PC-3 (cell line): ENCODE measurements at regions of chr11 and their contacts with region 1.

Region 1: DNA sequence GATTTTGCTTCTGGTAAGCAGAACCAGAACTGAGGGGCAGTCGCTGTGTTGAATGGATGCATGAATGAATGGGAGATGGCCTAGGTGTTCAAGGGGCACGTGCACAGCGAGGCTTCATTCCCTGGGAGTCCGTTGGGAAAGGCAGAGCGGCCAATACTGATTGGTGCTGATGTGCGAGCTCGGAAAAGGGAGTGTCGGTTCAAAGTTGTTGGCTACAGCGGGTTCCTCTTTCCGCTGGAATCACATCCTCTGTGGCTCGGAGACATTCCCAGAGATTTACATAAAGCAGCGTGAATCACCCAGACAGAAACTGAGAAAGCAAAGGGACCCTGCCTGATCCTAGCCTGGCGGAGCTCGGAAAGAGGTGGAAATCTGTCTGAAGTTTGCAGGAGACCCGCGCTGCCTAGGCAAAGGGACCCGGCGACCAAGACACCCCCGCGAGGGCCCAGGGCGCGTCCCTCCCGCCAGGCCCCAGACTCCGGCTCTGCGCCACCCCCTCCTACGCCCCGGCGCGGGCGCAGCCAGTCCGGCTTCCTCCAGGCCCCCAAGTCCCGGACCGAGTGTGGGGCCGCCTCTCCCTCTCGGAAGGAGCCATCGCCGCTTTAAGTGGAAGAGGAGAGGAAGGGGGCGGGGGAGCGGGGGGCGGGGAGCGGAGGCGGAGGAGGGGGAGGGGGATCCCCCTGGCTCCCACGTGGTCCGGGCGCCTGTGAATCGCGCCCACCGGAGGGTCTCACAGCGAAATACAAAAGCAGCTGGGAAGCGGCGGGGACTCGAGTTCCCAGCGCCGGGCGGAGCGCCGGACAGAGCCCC is at the start of gene FJX1:
- DNase-seq: peak; percentile 86
- ATAC-seq: peak; percentile 46
- H3K4me3 ChIP-seq: peak within 1 kb of the TSS; percentile 88
- H3K27ac ChIP-seq: peak within 1 kb of the TSS; percentile 93
- H3K4me1 ChIP-seq: peaks cover 53% of the 10 kb centered on the region
- H3K27me3 ChIP-seq: no peaks in the 10 kb centered on the region
- CTCF ChIP-seq: no peak
- total RNA-seq, gene FJX1: 71.4 and 97.1 TPM in 2 replicates

Region 2: DNA sequence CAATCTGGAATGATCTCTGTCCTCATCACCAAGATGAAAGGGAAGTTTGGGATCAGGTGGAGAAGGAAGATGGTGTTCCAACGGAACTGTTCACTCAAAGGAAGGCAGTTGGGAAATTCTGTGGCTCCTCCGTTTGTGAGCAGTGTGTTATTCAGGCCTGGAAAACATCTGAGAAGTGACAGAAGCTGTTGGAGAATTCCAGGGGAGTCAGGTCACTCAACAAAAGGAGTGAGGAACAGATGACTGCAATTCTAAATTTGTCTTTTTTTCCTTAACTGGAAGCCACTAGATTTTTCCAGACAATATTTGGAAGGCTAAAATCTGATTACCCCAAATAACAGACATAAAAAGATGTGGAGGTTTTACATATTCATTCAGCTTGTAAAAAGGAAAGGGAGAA is 371.1 kb before region 1 on chr11:
- CTCF ChIA-PET with region 1: no interaction called
- POLR2A ChIA-PET with region 1: no interaction called
- intact Hi-C with region 1: no loop called
- DNase-seq: no peak
- ATAC-seq: no peak
- H3K4me3 ChIP-seq: no peak overlapping the region
- H3K27ac ChIP-seq: no peak overlapping the region
- H3K4me1 ChIP-seq: no peaks in the 10 kb centered on the region
- H3K27me3 ChIP-seq: no peaks in the 10 kb centered on the region
- CTCF ChIP-seq: no peak

Region 3: DNA sequence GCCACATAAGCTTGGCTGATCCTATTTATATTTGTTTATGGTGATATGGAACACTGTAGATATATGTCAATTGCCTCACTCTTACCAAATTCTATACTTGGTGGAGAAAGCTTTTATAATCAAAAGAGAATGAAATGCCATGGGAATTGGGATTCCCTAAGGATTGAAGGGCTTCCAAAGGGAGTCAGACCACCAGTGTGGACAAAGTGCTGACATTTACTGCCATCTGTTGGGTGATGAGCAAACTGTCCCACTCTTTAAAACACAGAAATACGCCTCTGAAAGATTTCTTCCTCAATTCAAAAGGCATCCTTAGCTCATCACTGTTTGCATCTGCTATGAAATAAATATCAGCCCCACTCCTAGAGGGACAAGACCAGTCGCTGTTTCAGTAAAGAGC is 205.6 kb before region 1 on chr11:
- CTCF ChIA-PET with region 1: no interaction called
- POLR2A ChIA-PET with region 1: no interaction called
- intact Hi-C with region 1: no loop called
- DNase-seq: peak; percentile 32
- ATAC-seq: peak; percentile 54; the same call in 1 of the 2 replicates
- H3K4me3 ChIP-seq: no peak overlapping the region
- H3K27ac ChIP-seq: no peak overlapping the region
- H3K4me1 ChIP-seq: no peaks in the 10 kb centered on the region
- H3K27me3 ChIP-seq: peaks cover 31% of the 10 kb centered on the region
- CTCF ChIP-seq: peak; percentile 76

Region 4: DNA sequence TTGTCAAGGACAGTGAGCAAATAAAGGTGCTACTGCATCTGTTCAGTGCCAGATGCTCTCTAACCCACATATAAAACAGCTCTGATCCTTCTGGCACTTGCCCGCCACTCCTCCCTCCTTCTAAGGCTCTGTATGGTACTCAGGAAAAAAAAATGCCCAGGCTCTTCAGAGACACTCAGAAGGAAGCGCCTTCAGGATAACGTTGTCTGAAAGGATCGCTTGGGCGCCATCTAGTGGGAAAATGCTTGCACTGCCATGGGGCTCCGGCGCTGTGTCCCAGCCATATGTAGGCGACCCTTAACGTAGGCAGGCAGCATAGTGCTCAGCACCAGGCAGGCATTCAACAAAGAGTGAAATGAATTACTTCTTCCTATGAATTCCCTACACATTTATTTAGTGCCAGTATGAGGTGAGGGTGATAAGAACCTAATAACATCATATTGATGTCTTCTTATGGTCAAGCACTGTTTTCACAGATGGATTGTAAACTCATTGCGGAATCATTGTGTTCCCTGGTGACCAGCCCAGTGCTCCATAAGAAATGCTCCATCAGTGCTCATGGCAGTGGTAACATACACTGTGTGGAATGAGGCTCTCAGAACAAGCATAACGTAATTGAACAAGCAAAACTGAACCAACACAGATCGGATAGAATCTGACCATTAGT is 132.1 kb before region 1 on chr11:
- CTCF ChIA-PET with region 1: interaction called, 4 read pairs
- POLR2A ChIA-PET with region 1: interaction called, 3 read pairs
- intact Hi-C with region 1: loop called (anchors 1 kb)
- DNase-seq: peak; percentile 92
- ATAC-seq: peak; percentile 80
- H3K4me3 ChIP-seq: no peak overlapping the region
- H3K27ac ChIP-seq: no peak overlapping the region
- H3K4me1 ChIP-seq: peaks cover 26% of the 10 kb centered on the region
- H3K27me3 ChIP-seq: no peaks in the 10 kb centered on the region
- CTCF ChIP-seq: peak; percentile 87

Region 5: GRCh38 chr11:35549787-35550186 is 68.1 kb before region 1 on chr11:
- CTCF ChIA-PET with region 1: no interaction called
- POLR2A ChIA-PET with region 1: no interaction called
- intact Hi-C with region 1: no loop called
- DNase-seq: peak; percentile 89
- ATAC-seq: peak; percentile 93
- H3K4me3 ChIP-seq: no peak overlapping the region
- H3K27ac ChIP-seq: peak overlapping the region; percentile 44
- H3K4me1 ChIP-seq: peaks cover 31% of the 10 kb centered on the region
- H3K27me3 ChIP-seq: no peaks in the 10 kb centered on the region
- CTCF ChIP-seq: no peak

Region 6: GRCh38 chr11:35714882-35715627 is 97.2 kb after region 1 on chr11:
- CTCF ChIA-PET with region 1: interaction called, 3 read pairs
- POLR2A ChIA-PET with region 1: no interaction called
- intact Hi-C with region 1: loop called (anchors 1 kb)
- DNase-seq: peak; percentile 26
- ATAC-seq: peak; percentile 55
- H3K4me3 ChIP-seq: no peak overlapping the region
- H3K27ac ChIP-seq: no peak overlapping the region
- H3K4me1 ChIP-seq: no peaks in the 10 kb centered on the region
- H3K27me3 ChIP-seq: no peaks in the 10 kb centered on the region
- CTCF ChIP-seq: no peak

Region 7: GRCh38 chr11:35740061-35740799 is 122.3 kb after region 1 on chr11:
- CTCF ChIA-PET with region 1: no interaction called
- POLR2A ChIA-PET with region 1: no interaction called
- intact Hi-C with region 1: no loop called
- DNase-seq: no peak
- ATAC-seq: no peak
- H3K4me3 ChIP-seq: no peak overlapping the region
- H3K27ac ChIP-seq: no peak overlapping the region
- H3K4me1 ChIP-seq: no peaks in the 10 kb centered on the region
- H3K27me3 ChIP-seq: no peaks in the 10 kb centered on the region
- CTCF ChIP-seq: no peak

Region 8: DNA sequence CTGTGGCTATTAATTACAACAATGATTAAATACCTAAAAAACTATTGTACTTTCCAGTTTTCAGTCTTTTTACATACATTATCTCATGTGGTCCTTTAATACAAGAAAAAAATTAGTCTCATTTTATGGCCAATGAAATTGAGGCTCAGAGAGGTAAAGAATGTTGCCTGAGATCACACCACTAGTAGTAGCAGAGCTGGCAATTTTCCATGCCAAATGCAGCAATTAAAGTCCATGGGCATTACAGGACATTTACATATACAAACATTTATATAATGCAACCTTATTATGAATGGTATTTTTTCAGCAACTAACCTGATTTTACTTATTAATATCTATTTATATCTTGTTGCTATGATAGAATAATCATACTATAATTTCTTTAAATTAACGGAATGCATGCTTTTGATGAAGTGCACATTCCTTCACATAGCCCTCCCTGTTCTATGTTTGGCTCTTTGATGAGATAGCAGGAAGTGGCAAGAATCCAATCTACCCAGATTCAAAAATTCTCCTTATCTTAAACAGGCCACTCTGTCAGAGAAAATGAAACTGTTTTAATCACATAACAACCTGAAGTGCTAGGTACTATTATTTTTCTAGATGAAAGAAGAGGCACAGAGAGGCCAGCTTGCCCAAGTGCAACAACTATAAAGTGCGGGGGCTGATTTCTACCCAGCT is 205.1 kb after region 1 on chr11:
- CTCF ChIA-PET with region 1: interaction called, 17 read pairs
- POLR2A ChIA-PET with region 1: no interaction called
- intact Hi-C with region 1: loop called (anchors 1 kb)
- DNase-seq: peak; percentile 11
- ATAC-seq: no peak
- H3K4me3 ChIP-seq: no peak overlapping the region
- H3K27ac ChIP-seq: no peak overlapping the region
- H3K4me1 ChIP-seq: peaks cover 12% of the 10 kb centered on the region
- H3K27me3 ChIP-seq: no peaks in the 10 kb centered on the region
- CTCF ChIP-seq: no peak

Region 9: DNA sequence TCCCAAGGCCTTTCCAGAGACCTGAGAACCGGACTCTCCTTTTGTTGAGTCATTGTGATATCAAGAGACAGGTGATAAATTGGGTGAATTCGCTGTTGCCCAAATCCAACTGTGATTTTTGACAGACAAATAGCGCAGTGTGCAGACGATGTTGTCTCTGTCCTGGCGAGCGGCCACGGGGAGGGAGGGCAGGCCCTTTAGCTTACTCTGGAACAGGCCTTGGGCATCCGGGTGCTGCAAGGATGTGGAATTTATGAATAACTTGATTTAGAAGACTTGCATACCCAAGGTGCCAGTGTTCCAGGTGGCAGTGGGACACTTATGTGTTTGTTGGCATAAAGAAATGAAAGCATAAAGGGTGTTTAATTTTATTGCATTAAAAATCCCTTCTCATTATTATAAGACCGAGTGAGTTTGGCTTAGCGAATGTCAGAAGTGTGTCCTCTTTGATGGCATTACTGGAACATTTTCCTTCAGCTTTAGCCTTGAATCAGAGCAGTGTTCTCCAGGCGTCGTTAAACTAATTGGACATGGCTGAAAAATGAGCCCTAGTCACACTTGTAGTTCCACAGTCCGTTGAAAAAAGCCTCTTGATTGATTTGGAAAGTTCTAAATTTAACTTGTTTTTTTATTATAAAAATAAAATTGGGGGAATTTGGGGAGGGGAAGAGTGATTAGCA is 335.3 kb after region 1 on chr11:
- CTCF ChIA-PET with region 1: no interaction called
- POLR2A ChIA-PET with region 1: no interaction called
- intact Hi-C with region 1: loop called (anchors 5 kb)
- DNase-seq: peak; percentile 31
- ATAC-seq: peak; percentile 16; the same call in 1 of the 2 replicates
- H3K4me3 ChIP-seq: no peak overlapping the region
- H3K27ac ChIP-seq: peak overlapping the region; percentile 29
- H3K4me1 ChIP-seq: peaks cover 54% of the 10 kb centered on the region
- H3K27me3 ChIP-seq: no peaks in the 10 kb centered on the region
- CTCF ChIP-seq: no peak

Region 10: DNA sequence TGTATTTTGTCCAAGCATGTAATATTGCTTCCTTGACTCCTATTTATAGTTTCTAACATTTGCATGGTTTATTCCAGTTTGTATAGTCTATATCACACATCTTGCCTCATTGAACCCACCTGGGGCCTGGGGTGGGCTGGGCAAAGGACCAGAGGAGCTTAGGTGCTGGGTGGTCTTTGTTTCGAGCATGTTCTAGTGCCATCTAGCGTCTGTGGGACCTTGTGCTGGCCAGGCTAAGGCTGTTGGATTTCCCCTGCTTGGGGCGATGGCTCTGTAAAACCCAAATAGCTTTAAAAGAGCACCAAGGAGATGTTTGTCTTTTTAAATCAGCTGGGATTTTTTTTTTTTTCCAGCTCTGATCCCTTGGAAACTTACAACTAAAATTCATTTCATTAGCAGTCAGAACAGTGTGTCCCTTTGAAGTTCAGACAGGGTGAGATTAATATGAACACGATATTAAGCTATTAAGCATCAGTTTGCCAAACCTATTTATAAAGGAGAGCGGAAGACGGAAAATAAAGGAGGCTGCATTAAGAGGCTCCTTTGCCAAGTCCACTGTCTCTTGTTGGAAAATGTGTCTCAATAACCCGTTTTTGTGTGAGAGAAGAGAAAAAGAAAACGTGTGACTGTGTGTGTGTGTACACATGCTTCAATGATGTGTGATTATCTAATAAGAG is 514.0 kb after region 1 on chr11:
- CTCF ChIA-PET with region 1: no interaction called
- POLR2A ChIA-PET with region 1: no interaction called
- intact Hi-C with region 1: loop called (anchors 1 kb)
- DNase-seq: peak; percentile 29
- ATAC-seq: peak; percentile 69
- H3K4me3 ChIP-seq: no peak overlapping the region
- H3K27ac ChIP-seq: no peak overlapping the region
- H3K4me1 ChIP-seq: peaks cover 11% of the 10 kb centered on the region
- H3K27me3 ChIP-seq: no peaks in the 10 kb centered on the region
- CTCF ChIP-seq: peak; percentile 68